Activated T-helper 1 cell treated with anti-CD3 and anti-CD28 coated beads, Interleukin-12 subunit alpha, Interleukin-12 subunit beta, Interleukin-2, Interleukin-4 antibody, amounts not matched to agents 30 ng/mL and 10 ng/mL and 1 ng/mL, durations not matched to agents 14 hours and 24 hours and 36 hours (primary cell): ENCODE measurements at regions of chr2 and their contacts with region 1.

Region 1: DNA sequence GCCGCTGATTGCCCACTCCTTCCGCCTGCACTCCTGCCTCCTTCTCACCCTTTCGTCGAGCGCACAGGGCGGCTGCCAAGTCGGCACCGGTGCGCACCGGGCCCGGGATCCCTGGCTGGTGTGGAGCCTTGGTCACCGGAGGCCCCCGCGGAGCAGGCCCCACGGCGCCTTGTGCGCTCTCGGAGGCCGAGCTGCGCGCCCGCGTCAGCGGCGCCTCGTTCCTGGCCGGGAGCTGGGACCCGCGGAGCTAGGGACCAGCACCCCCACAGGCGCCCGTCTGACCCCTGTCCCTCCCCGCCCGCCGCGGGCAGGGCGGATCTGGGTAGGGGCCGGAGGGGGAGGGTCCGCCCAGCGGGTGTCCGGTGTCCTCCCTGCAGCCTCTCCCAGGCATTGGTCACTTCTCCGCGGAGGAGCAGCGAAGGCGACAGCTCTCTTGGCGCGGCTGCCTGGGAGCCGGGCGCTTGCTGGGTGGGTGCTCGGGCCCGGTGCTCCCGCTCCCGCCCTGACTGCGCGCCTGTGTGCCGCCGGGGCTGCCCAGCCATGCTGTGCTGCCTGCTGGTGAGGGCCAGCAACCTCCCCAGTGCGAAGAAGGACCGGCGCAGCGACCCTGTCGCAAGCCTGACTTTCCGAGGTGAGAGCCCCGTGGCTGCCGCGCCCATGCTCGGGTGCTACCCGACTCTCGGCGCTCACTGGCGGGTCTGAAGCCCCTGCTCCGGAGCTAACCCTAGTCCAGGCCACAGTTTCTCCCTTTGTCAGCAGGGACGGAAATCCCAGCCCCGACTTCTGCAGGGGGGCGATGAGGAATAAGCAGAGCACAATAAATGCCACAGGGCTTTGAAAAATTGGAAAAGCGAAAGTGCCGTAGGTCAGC is 13.2 kb downstream of the DYSF start:
- DNase-seq: no peak
- H3K4me3 Mint-ChIP-seq: peak overlapping the region; percentile 78
- H3K27ac Mint-ChIP-seq: no peak overlapping the region
- H3K4me1 Mint-ChIP-seq: peaks cover 8% of the 10 kb centered on the region
- H3K27me3 Mint-ChIP-seq: peaks cover 36% of the 10 kb centered on the region

Region 2: GRCh38 chr2:71453404-71454220 is 12.9 kb before region 1 on chr2 and contains the start of gene DYSF:
- intact Hi-C with region 1: loop called (anchors 1 kb)
- DNase-seq: no peak
- H3K4me3 Mint-ChIP-seq: peak within 1 kb of the TSS; percentile 35
- H3K27ac Mint-ChIP-seq: no peak within 1 kb of the TSS
- H3K4me1 Mint-ChIP-seq: peaks cover 30% of the 10 kb centered on the region
- H3K27me3 Mint-ChIP-seq: peaks cover 32% of the 10 kb centered on the region
- total RNA-seq, gene DYSF: not detected in 2 replicates